Ascending aorta (tissue), 2 donors: ENCODE measurements at regions of chr11 and their contacts with region 1.

Region 1: GRCh38 chr11:47373876-47374720 is 4.2 kb downstream of the SPI1 start:
- DNase-seq: peak in 1 of 2 donors; percentile 91
- H3K4me3 ChIP-seq: no peak overlapping the region
- H3K27ac ChIP-seq: peak overlapping the region in 1 of 2 donors; percentile 3
- H3K4me1 ChIP-seq: peaks cover 0 to 3% of the 10 kb centered on the region in 2 donors
- H3K27me3 ChIP-seq: no peaks in the 10 kb centered on the region
- CTCF ChIP-seq: peak; percentile 78 to 96 (median 92)

Region 2: DNA sequence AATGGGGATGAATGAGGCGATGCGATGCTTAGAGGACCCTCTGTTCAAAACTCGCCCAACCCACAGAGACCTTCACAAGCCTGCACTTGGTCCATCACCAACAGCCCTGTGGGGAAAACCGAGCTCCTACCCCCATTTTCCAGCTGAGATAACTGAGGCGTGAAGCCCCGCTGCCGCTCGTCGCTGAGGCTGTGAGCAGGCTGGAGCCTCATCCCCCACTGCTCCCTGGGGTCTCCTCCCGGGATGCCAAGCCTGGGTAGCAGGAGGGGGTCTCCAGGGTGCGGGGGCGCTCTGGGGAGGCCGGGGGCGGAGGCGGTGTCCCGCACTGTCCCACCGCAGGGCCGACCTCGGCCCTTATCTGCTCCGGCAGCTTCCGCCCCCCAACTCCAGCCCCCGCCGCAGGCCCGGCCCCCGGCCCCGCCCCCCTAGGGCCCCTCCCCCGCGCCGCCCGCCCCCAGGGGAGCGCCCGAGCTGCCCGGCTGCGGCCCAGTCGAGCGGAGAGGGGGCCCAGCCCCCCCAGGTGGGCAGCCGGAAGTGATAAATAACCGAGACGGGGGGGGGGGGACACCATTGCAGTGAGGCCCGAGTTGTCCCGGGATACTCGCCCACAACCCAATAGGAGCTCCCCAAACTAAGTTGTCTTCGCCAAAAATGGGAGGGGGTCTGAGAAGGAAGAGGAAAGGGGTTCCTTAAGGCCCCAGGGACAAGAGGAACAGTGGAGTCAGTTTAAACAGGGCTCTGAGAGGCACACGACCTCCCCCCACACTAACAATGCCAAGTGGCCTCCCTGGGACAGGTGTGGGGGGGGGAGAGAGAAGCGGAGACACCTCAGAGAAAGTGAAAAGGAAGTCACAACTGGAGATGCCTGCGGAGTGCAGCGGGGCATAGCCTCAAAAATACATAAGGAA is 26.0 kb after region 1 on chr11:
- intact Hi-C with region 1: loop called (anchors 1 kb)
- DNase-seq: no peak
- H3K4me3 ChIP-seq: peak overlapping the region; percentile 57 to 66
- H3K27ac ChIP-seq: peak overlapping the region; percentile 75 to 77
- H3K4me1 ChIP-seq: peaks cover 4 to 9% of the 10 kb centered on the region in 2 donors
- H3K27me3 ChIP-seq: no peaks in the 10 kb centered on the region
- CTCF ChIP-seq: no peak

Region 3: GRCh38 chr11:47454180-47454644 is 80.1 kb after region 1 on chr11:
- intact Hi-C with region 1: loop called (anchors 1 kb)
- DNase-seq: peak; percentile 49 to 87
- H3K4me3 ChIP-seq: no peak overlapping the region
- H3K27ac ChIP-seq: no peak overlapping the region
- H3K4me1 ChIP-seq: no peaks in the 10 kb centered on the region
- H3K27me3 ChIP-seq: no peaks in the 10 kb centered on the region
- CTCF ChIP-seq: peak; percentile 71 to 77 (median 76)